Activated naive CD4-positive, alpha-beta T cell treated with anti-CD3 and anti-CD28 coated beads, Interleukin-2, amount 10 ng/mL, durations not matched to agents 7 days and 5 days (primary cell): ENCODE measurements at regions of chr14 and their contacts with region 1.

Region 1: DNA sequence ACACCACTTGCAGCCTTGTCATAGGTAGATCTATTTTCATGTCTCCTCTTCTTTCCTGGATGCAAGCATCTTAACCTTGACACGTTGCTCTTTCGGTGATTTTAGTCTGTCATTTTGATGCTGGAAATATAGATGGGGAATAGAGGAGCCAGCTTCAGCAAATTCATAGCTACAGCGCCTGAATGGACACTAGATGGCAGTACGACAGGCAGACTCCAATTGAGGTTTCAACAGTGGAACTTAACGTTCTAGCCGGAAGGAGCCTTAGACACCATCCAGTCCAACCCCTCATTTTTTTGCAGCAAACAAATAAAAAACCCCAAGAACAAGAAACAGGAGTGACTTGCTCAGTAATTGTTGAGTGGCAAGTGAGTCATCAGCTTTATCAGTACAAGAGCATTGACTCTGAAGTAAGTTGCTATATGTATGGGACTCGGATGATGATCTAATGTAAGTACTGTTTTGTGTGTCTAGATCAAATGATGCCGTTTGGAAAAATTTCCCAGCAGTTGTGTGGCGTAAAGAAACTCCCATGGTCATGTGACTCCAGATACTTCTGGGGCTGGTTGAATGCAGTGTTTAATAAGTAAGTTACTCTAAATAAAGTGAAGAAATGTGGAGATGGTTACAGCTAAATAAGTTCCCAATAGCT is 9.0 kb downstream of the DMAC2L start:
- DNase-seq: peak; percentile 79
- H3K4me3 Mint-ChIP-seq: no peak overlapping the region
- H3K27ac Mint-ChIP-seq: no peak overlapping the region
- H3K4me1 Mint-ChIP-seq: peaks cover 23% of the 10 kb centered on the region
- H3K27me3 Mint-ChIP-seq: no peaks in the 10 kb centered on the region

Region 2: DNA sequence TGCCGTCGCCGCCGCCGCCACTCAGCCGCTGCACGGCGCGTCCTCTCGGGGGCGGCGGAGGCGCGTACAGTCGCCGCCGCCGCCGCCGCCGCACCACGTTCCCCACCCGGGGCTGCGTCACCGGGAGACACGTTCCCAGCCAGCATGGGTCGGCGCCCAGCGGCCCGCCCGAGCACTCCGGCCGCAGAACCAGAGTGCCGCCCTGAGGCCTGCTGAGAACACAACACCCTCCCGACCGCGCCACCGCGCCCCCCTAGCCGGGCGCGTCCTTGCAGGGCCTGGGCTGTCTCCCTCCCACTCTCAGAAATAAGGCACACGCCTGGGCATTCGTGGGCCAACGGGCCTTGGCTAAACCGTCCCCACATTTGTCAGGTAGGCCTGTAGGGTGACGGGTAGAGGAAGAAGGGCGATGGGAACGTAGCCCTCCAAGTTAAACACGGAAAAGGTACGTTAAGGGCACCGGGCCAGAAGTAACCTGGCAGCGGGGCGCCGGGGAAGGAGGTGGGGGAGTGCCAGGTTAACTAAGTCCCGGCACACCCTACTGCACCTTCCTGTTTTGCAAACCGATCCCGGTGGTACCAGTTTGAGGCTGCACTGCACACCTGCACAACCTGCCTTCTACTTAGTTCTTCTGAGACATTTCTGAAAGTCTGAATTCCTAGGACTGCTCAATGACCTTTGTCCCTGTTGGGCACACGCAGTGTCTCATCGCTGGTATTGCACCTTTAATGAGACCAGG is 211.5 kb after region 1 on chr14 and contains the start of gene MAP4K5:
- CTCF ChIA-PET with region 1: interaction called, 21 read pairs
- DNase-seq: peak; percentile 92
- H3K4me3 Mint-ChIP-seq: peak within 1 kb of the TSS; percentile 89
- H3K27ac Mint-ChIP-seq: peak within 1 kb of the TSS; percentile 84
- H3K4me1 Mint-ChIP-seq: peaks cover 39% of the 10 kb centered on the region
- H3K27me3 Mint-ChIP-seq: peaks cover 22% of the 10 kb centered on the region

Region 3: DNA sequence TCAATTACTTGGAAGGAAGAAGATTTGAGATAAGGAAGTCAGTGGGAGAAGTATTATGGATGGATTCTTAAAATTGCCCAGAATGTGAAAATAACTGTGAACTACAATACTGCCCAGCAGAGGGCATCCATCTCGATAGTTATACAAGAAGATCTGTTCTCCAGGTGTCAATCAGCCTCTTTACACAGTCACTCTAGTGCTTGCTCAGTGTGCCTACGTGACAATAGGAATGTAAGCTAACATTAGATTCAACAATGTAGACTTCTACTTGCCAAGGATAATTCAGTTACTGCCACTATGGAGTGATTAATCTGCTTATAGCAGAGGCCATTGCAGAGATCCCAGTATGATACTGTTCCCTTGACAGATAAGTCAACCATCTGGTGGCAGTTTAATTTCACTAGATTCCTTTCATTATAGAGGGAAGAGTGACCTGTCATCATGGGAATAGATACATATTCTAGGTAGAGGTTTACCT is 221.8 kb after region 1 on chr14:
- CTCF ChIA-PET with region 1: interaction called, 11 read pairs
- DNase-seq: peak; percentile 60
- H3K4me3 Mint-ChIP-seq: no peak overlapping the region
- H3K27ac Mint-ChIP-seq: no peak overlapping the region
- H3K4me1 Mint-ChIP-seq: peaks cover 13% of the 10 kb centered on the region
- H3K27me3 Mint-ChIP-seq: peaks cover 12% of the 10 kb centered on the region